ENCODE measurements at regions of chr1 and their contacts with region 1.

Region 1: GRCh38 chr1:173476664-173477285 is 360 bp upstream of the PRDX6 start:
- DNase-seq: peak; percentile 84 to 90 (median 89)
- H3K4me3 ChIP-seq: peak overlapping the region; percentile 94
- H3K27ac ChIP-seq: peak overlapping the region; percentile 65 to 88
- H3K4me1 ChIP-seq: peaks cover 9% of the 10 kb centered on the region
- H3K27me3 ChIP-seq: no peaks in the 10 kb centered on the region
- CTCF ChIP-seq: peak in 1 of 3 donors; percentile 12
- EP300 ChIP-seq: no peak
- POLR2A ChIP-seq: peak; percentile 15

Region 2: DNA sequence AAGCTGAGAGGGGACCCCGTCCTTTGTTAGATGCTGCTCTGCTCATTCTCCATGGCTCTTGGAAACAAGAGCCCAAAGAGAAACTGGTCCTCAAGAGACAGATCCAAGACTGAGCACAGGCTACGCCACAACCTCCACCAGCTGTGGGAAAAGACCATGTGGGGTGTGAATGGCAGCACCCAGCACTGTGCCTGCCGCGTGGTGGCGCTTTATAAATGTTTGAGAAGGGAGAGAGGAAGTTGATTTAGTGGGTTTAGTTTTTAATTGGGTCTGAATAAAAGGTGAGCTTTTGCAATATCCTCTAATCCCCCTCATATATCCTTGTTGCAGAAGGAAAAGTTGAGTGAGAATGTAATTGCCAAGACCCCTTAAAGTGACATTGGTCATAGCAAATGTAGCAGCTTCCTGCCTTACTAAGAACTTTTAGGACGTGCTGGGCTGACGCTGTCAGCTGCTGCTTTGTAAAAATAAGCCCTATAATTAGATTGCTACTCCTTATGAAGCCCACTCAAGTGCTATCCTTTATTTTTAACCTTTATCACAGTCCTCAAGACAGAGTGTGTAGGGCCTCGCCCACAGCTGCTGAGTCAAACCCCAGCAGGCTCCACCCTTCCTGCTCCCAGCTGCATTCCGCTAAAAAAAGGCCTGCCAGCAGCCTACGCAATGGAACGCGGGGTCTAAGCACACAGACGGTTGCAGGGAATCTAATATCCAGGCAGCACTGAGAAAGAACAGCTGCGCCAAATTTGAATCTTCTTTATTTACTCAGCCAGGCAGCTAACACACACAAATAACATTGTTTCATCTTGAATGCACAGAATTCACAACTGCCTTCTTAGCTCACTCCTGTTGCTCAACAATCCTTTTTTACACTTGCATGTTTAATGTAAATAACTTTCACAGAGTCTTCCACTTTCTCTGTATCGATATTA is 47.0 kb before region 1 on chr1:
- intact Hi-C with region 1: loop called in 2 of 4 experiments (anchors 5 kb)
- DNase-seq: peak; percentile 91 to 92 (median 91)
- H3K4me3 ChIP-seq: no peak overlapping the region
- H3K27ac ChIP-seq: peak overlapping the region; percentile 21 to 71
- H3K4me1 ChIP-seq: no peaks in the 10 kb centered on the region
- H3K27me3 ChIP-seq: no peaks in the 10 kb centered on the region
- CTCF ChIP-seq: peak in 2 of 3 donors; percentile 30 to 40
- EP300 ChIP-seq: no peak
- POLR2A ChIP-seq: peak; percentile 10

Region 3: GRCh38 chr1:173867753-173868265 is 391.0 kb after region 1 on chr1 and contains the start of gene GAS5:
- intact Hi-C with region 1: loop called in 1 of 4 experiments (anchors 5 kb)
- DNase-seq: peak; percentile 99 to 100 (median 100)
- H3K4me3 ChIP-seq: peak within 1 kb of the TSS; percentile 98
- H3K27ac ChIP-seq: peak within 1 kb of the TSS; percentile 93 to 97
- H3K4me1 ChIP-seq: peaks cover 8% of the 10 kb centered on the region
- H3K27me3 ChIP-seq: no peaks in the 10 kb centered on the region
- CTCF ChIP-seq: peak in 1 of 3 donors; percentile 11
- EP300 ChIP-seq: peak; percentile 35
- POLR2A ChIP-seq: peak; percentile 92
- total RNA-seq, gene GAS5: 958 to 2,885 (median 1,266) TPM